ENCODE measurements at regions of chr2 and their contacts with region 1.

Region 1: GRCh38 chr2:158723917-158724690 is 71.0 kb upstream of the DAPL1 start:
- DNase-seq: peak; percentile 63
- ATAC-seq: peak; percentile 85
- H3K4me3 ChIP-seq: peak overlapping the region; percentile 6 to 60 (median 22); a peak in 4 of 6 replicates
- H3K27ac ChIP-seq: no peak overlapping the region
- H3K4me1 ChIP-seq: peaks cover 55% of the 10 kb centered on the region
- H3K27me3 ChIP-seq: peaks cover 4 to 8% of the 10 kb centered on the region in 2 experiments; a peak in 2 of 5 replicates
- CTCF ChIP-seq: peak; percentile 82
- EP300 ChIP-seq: peak in 1 of 2 experiments; percentile 42; a peak in 1 of 4 replicates
- POLR2A ChIP-seq: no peak
- RAD21 ChIP-seq: no peak

Region 2: GRCh38 chr2:158692372-158693103 is 31.6 kb before region 1 on chr2:
- CTCF ChIA-PET with region 1: no interaction called
- POLR2A ChIA-PET with region 1: interaction called, 10 read pairs
- in situ Hi-C with region 1: no loop called
- intact Hi-C with region 1: no loop called
- DNase-seq: peak; percentile 21
- ATAC-seq: peak; percentile 37
- H3K4me3 ChIP-seq: no peak overlapping the region
- H3K27ac ChIP-seq: no peak overlapping the region
- H3K4me1 ChIP-seq: peaks cover 10% of the 10 kb centered on the region
- H3K27me3 ChIP-seq: peaks cover 0 to 3% of the 10 kb centered on the region in 2 experiments; a peak in 2 of 5 replicates
- CTCF ChIP-seq: no peak
- EP300 ChIP-seq: no peak
- POLR2A ChIP-seq: no peak
- RAD21 ChIP-seq: no peak

Measured in HepG2 (cell line).